Sigmoid colon (tissue), 7 donors: ENCODE measurements at regions of chr3 and their contacts with region 1.

Region 1: GRCh38 chr3:141441381-141442364 is 45.2 kb upstream of the RASA2 start:
- DNase-seq: no peak
- H3K4me3 ChIP-seq: peak overlapping the region in 2 of 4 donors; percentile 5 to 18
- H3K27ac ChIP-seq: peak overlapping the region; percentile 74 to 96 (median 89)
- H3K4me1 ChIP-seq: peaks cover 0 to 87% (median 75%) of the 10 kb centered on the region in 4 donors
- H3K27me3 ChIP-seq: no peaks in the 10 kb centered on the region
- CTCF ChIP-seq: peak; percentile 29 to 93 (median 86)
- EP300 ChIP-seq: no peak
- POLR2A ChIP-seq: no peak

Region 2: DNA sequence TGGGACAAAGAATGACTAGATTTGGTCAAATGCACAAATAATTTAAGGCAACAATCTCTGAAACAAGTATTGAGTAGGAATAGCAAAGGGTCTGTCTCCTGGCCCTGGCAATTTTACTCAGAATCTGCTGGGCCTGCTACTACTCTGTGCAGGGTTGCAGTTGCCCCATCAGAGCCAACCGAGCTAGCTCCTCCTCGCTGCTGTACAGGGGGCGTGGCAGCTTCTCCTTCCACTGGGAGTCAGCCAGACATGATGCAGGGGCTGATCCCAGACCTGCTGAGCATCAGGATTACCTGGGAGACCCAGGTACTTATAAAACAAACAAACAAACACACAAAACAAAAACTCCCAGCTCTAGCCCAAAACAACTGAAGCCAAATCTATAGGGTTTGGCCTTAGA is 240.6 kb before region 1 on chr3:
- intact Hi-C with region 1: no loop called
- DNase-seq: no peak
- H3K4me3 ChIP-seq: no peak overlapping the region
- H3K27ac ChIP-seq: no peak overlapping the region
- H3K4me1 ChIP-seq: no peaks in the 10 kb centered on the region
- H3K27me3 ChIP-seq: no peaks in the 10 kb centered on the region
- CTCF ChIP-seq: no peak
- EP300 ChIP-seq: no peak
- POLR2A ChIP-seq: no peak

Region 3: GRCh38 chr3:141402476-141403171 is 39.0 kb before region 1 on chr3:
- intact Hi-C with region 1: loop called (anchors 5 kb)
- DNase-seq: peak; percentile 89
- H3K4me3 ChIP-seq: peak overlapping the region; percentile 66 to 86 (median 72)
- H3K27ac ChIP-seq: peak overlapping the region; percentile 97 to 98 (median 98)
- H3K4me1 ChIP-seq: peaks cover 0 to 73% (median 68%) of the 10 kb centered on the region in 4 donors
- H3K27me3 ChIP-seq: no peaks in the 10 kb centered on the region
- CTCF ChIP-seq: peak in 1 of 4 experiments; percentile 41
- EP300 ChIP-seq: no peak
- POLR2A ChIP-seq: peak; percentile 41 to 45

Region 4: GRCh38 chr3:141796081-141796888 is 354.6 kb after region 1 on chr3:
- intact Hi-C with region 1: no loop called
- DNase-seq: peak; percentile 86
- H3K4me3 ChIP-seq: peak overlapping the region in 2 of 4 donors; percentile 44 to 46
- H3K27ac ChIP-seq: peak overlapping the region; percentile 78 to 86 (median 85)
- H3K4me1 ChIP-seq: peaks cover 0 to 47% (median 38%) of the 10 kb centered on the region in 4 donors
- H3K27me3 ChIP-seq: no peaks in the 10 kb centered on the region
- CTCF ChIP-seq: no peak
- EP300 ChIP-seq: peak in 2 of 4 donors; percentile 18 to 57
- POLR2A ChIP-seq: no peak

Region 5: GRCh38 chr3:143045639-143046038 is 1604.0 kb after region 1 on chr3:
- intact Hi-C with region 1: no loop called
- DNase-seq: no peak
- H3K4me3 ChIP-seq: no peak overlapping the region
- H3K27ac ChIP-seq: no peak overlapping the region
- H3K4me1 ChIP-seq: no peaks in the 10 kb centered on the region
- H3K27me3 ChIP-seq: no peaks in the 10 kb centered on the region
- CTCF ChIP-seq: no peak
- EP300 ChIP-seq: no peak
- POLR2A ChIP-seq: no peak